Naive thymus-derived CD4-positive, alpha-beta T cell (primary cell): ENCODE measurements at regions of chr12 and their contacts with region 1.

Region 1: GRCh38 chr12:89907659-89908058 is 199.0 kb upstream of the ATP2B1 start:
- DNase-seq: no peak
- ATAC-seq: no peak
- H3K4me3 ChIP-seq: no peak overlapping the region
- H3K4me3 Mint-ChIP-seq: no peak overlapping the region
- H3K27ac ChIP-seq: no peak overlapping the region
- H3K27ac Mint-ChIP-seq: no peak overlapping the region
- H3K4me1 ChIP-seq: no peaks in the 10 kb centered on the region
- H3K4me1 Mint-ChIP-seq: peaks cover 0 to 2% (median 0%) of the 10 kb centered on the region in 7 donors
- H3K27me3 ChIP-seq: no peaks in the 10 kb centered on the region
- H3K27me3 Mint-ChIP-seq: no peaks in the 10 kb centered on the region

Region 2: DNA sequence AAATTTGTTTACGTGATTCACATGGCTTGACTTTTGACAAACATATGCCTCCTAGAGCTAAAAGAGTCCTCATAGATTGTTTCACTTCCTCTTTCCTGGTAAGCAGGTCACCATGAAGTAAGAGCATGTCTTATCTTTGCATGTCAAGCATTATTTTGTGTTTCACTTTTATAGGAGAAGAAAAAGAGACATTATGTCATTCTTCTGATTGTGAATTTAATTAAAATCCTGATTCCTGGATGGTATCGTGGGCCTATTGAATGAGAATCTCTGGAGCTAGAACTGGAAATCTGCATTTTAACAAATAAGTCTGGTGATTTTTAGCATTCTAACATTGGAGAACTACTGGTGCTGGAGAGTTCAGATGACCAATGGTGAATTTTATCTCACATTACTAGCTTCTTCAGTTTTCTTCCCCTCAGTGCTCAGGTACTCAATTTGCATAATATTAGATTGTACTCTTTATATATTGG is 19.6 kb after region 1 on chr12:
- CTCF ChIA-PET with region 1: no interaction called
- POLR2A ChIA-PET with region 1: no interaction called
- intact Hi-C with region 1: loop called in 1 of 2 experiments (anchors 2 kb)
- DNase-seq: no peak
- ATAC-seq: peak; percentile 74
- H3K4me3 ChIP-seq: no peak overlapping the region
- H3K4me3 Mint-ChIP-seq: peak overlapping the region in 2 of 10 donors; percentile 0 to 13
- H3K27ac ChIP-seq: no peak overlapping the region
- H3K27ac Mint-ChIP-seq: peak overlapping the region in 2 of 9 donors; percentile 24 to 42
- H3K4me1 ChIP-seq: no peaks in the 10 kb centered on the region
- H3K4me1 Mint-ChIP-seq: peaks cover 0 to 9% (median 7%) of the 10 kb centered on the region in 7 donors
- H3K27me3 ChIP-seq: no peaks in the 10 kb centered on the region
- H3K27me3 Mint-ChIP-seq: no peaks in the 10 kb centered on the region